HEK293T (cell line): ENCODE measurements at regions of chr12 and their contacts with region 1.

Region 1: DNA sequence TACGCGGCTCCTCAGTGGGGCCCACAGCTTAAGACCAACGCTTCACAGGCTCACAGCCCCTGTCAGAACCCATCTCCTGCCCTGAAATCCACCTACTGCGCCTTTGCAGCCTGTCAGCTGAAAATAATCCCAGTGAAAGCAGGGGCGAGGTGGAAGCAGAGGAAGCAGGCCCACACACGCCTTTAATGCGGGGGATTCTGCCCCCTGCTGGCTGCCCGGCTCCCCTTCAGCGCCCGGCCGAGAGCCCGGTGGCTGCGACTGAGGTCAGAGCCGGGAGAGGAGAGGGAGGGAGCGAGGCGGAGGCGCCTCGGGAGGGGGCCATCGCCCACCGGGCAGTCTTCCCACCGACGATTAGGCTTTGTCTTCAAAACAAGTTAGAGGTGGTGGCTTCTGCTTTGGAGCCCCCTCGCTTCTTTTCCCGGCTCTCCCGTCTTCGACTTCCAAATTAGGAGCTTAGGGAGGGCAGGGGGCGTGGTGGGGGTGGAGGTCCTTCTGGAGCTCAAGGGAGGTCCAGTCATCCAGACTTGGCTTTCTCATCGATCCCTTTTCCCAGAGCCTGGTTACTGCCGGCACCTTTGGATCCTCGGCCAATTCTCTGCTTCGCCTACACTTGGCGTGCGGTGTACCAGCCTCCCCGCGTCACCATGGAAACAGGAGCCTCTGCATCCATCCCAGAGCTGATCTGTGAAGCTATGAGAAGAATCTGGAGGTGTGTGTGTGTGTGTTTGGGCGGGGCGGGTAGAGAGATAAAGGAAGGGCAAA is 25.2 kb upstream of the RND1 start:
- DNase-seq: peak; percentile 85

Region 2: DNA sequence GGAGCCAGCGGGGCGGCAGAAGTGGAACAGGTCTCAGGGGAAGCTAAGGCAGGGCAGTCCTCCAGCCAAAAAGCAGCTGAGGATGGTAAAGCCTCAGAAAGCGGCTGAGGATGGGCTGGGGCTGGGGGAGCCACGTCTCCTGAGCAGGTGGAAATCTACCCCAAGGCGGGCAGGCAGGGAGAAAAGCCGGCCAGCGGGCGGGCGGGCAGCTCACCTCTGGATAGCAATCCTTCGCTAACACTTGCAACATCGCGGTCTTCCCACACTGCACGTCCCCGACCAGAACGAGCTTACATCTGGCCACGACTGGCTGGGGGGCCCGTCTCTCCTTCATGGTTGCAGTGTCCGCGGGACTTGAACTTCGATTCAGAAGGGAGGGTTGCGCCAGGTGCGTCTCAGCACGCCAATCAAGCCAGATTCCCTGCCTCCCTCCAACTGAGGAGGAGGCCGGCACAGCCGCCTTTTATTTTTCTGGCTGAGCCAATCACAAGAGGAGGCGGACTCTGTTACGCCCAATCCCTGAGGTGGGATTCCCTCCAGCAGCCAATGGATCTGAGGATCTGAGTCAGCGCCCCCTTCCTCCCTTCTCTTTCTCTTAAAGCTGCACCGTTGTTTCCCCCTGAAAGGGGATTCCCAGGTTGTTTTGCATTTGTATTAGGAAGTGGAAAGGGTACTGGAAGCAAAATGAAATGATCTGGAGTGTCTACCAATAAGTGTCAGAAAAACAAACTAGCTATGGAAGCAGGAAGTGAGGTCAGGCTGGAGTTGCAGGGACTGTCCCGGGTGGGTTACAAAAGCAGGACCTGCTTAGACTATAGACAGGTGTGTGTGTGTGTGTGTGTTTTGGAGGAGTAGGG is 25.2 kb before region 1 on chr12 and contains the start of gene RND1:
- CTCF ChIA-PET with region 1: interaction called, 21 read pairs
- POLR2A ChIA-PET with region 1: interaction called, 17 read pairs
- DNase-seq: peak; percentile 95

Region 3: GRCh38 chr12:48903982-48904411 is 13.2 kb after region 1 on chr12:
- CTCF ChIA-PET with region 1: interaction called, 17 read pairs
- POLR2A ChIA-PET with region 1: no interaction called
- DNase-seq: peak; percentile 90